IMR-90 (cell line): ENCODE measurements at regions of chr12 and their contacts with region 1.

Region 1: GRCh38 chr12:55396326-55396725 is 4.0 kb upstream of the OR6C65 start:
- DNase-seq: no peak
- ATAC-seq: no peak
- H3K4me3 ChIP-seq: no peak overlapping the region
- H3K27ac ChIP-seq: no peak overlapping the region
- H3K4me1 ChIP-seq: no peaks in the 10 kb centered on the region
- H3K27me3 ChIP-seq: no peaks in the 10 kb centered on the region
- CTCF ChIP-seq: no peak
- POLR2A ChIP-seq: no peak
- RAD21 ChIP-seq: no peak

Region 2: DNA sequence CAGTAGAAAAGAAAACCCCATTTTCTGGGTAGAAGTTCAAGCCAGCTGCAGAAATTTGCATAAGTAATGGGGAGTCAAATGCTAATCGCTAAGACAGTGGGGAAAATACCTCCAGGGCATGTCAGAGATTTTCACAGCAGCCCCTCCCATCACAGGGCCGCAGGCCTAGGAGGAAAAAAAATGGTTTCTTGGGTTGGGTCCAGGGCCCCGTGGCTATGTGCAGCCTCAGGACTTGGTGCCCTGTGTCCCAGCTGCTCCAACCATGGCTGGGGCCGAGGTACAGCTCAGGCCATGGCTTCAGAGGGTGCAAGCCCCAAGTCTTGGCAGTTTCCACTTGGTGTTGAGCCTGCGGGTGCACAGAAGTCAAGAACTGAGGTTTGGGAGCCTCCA is 255.0 kb after region 1 on chr12:
- CTCF ChIA-PET with region 1: no interaction called
- POLR2A ChIA-PET with region 1: interaction called, 13 read pairs
- dilution Hi-C with region 1: no loop called
- in situ Hi-C with region 1: no loop called
- intact Hi-C with region 1: no loop called
- DNase-seq: no peak
- ATAC-seq: no peak
- H3K4me3 ChIP-seq: no peak overlapping the region
- H3K27ac ChIP-seq: no peak overlapping the region
- H3K4me1 ChIP-seq: no peaks in the 10 kb centered on the region
- H3K27me3 ChIP-seq: peaks cover 2% of the 10 kb centered on the region
- CTCF ChIP-seq: no peak
- POLR2A ChIP-seq: no peak
- RAD21 ChIP-seq: no peak